Activated naive CD4-positive, alpha-beta T cell treated with anti-CD3 and anti-CD28 coated beads, Interleukin-2, amount 10 ng/mL, durations not matched to agents 7 days and 5 days (primary cell): ENCODE measurements at regions of chr3 and their contacts with region 1.

Region 1: DNA sequence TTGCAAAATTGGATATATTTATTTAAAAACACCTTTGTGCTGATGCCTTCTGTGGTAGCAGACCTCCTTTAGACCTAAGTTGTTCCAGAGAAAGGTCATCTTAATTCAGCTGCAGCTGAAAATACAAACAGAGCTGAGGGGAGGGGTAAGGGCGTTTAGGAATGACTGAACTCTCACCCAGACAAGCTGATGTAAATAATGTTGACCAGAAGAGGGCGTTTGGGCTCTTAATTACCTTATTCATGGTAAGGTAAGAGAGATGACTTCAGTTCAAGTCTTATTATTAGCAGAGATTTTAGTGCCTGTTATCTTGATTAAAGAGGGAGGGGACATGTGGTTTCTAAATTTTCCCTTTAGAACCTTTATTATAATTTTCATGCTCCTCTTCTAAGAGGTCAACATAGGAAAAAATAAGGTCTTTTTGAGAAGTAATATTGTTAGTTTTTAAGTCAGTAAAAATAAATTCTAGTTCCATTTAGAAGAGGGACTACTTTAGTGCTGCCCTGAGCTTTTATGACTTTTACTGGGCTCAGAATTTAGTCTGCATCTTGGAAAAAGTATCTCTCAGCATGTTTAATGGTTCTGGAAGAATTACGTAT is 46.3 kb downstream of the GPR171 start:
- DNase-seq: peak; percentile 50
- H3K4me3 Mint-ChIP-seq: no peak overlapping the region
- H3K27ac Mint-ChIP-seq: no peak overlapping the region
- H3K4me1 Mint-ChIP-seq: no peaks in the 10 kb centered on the region
- H3K27me3 Mint-ChIP-seq: peaks cover 17% of the 10 kb centered on the region

Region 2: DNA sequence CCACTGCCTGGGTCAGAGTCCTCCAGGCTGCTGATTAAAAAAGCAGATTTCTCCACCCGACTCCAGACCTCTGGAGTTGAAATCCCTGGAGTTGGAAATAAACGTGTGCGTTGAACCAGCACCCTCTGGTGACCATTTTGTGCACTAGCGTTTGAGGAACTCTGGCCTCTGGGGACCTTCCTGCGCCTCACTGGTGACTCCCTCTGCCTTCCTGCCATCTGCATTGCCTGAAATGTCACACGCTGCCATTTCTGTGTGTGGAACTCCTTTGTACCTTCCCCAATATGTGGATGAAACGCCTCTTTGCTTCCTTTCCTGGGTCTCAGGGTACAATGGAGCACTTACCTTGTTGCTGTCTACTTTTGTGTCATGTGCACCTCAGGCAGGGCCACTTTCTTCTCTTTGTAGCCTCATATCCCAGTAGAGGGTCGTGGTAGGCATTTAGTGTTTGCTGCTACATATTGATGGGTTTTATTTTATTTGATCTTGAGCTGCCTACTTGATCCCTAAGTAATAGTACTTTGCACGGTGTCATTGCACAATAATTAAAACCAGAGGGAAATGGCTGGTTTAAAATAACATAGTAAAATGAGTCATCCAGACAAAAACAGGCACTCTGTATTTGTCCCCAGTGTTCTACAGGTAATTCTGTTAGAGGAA is 10.5 kb before region 1 on chr3:
- CTCF ChIA-PET with region 1: interaction called, 13 read pairs
- DNase-seq: peak; percentile 69
- H3K4me3 Mint-ChIP-seq: no peak overlapping the region
- H3K27ac Mint-ChIP-seq: no peak overlapping the region
- H3K4me1 Mint-ChIP-seq: peaks cover 3% of the 10 kb centered on the region
- H3K27me3 Mint-ChIP-seq: peaks cover 17% of the 10 kb centered on the region

Region 3: DNA sequence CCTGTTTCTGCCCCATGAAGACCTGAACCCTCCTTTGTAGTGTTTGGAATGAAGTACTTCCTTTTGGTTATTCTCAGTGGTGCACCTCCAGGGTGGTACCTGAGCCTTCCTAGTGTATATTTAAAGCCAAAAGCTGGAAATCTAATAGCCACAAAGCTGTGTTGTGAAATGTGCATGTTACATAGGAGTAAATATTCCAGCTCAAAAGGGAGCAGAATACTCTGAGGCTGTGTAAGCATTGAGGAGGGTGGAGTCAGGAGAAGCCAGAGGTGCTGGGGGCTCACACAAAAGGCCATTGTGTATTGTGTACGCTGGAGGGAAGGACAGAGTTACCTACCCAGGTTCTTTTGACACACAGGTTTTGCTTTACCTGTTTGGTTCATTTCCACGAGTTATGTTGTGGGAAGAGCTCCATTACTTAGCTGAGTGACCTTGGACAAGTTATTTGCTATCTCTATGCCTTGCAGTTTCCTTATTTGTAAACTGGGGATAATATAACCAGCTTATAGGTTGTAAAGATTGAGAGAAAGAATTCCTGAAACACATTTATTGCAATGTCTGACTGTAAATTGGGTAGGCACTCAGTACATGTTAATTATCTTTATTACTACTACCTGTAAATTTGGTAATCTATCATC is 21.6 kb after region 1 on chr3:
- CTCF ChIA-PET with region 1: no interaction called
- DNase-seq: no peak
- H3K4me3 Mint-ChIP-seq: no peak overlapping the region
- H3K27ac Mint-ChIP-seq: no peak overlapping the region
- H3K4me1 Mint-ChIP-seq: peaks cover 36% of the 10 kb centered on the region
- H3K27me3 Mint-ChIP-seq: peaks cover 8% of the 10 kb centered on the region

Region 4: DNA sequence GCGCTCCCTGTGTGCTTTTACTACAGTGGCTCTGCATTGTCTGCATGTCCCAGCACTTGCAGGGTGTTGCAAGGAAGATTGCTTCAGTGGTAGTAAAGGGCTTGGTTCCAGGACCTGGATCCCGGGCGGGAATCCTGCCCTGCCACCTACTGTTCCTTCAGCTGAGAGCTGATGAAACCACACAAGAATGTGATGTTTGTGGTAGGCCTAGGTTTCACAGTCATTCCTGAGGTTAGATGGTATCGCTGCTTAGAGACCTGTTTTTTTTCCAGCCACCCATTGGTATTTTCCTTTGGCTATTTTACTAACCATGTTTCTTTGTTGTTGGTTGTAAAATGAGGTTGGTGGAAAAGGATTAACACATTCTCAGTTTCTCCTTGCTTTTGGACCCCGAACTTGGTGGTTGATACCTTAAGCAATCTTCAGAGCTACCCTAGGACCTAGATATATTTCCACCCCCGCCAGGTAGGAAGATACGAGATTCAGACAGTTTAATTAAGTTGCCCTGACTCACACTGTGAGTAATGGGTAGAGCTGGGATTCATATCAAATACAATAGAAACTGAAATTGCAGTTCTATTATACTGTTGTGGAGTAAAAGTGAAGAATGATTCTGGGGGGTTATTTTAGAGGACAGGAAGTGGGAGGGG is 148.5 kb after region 1 on chr3:
- CTCF ChIA-PET with region 1: interaction called, 10 read pairs
- DNase-seq: no peak
- H3K4me3 Mint-ChIP-seq: no peak overlapping the region
- H3K27ac Mint-ChIP-seq: no peak overlapping the region
- H3K4me1 Mint-ChIP-seq: peaks cover 14% of the 10 kb centered on the region
- H3K27me3 Mint-ChIP-seq: peaks cover 5% of the 10 kb centered on the region

Region 5: DNA sequence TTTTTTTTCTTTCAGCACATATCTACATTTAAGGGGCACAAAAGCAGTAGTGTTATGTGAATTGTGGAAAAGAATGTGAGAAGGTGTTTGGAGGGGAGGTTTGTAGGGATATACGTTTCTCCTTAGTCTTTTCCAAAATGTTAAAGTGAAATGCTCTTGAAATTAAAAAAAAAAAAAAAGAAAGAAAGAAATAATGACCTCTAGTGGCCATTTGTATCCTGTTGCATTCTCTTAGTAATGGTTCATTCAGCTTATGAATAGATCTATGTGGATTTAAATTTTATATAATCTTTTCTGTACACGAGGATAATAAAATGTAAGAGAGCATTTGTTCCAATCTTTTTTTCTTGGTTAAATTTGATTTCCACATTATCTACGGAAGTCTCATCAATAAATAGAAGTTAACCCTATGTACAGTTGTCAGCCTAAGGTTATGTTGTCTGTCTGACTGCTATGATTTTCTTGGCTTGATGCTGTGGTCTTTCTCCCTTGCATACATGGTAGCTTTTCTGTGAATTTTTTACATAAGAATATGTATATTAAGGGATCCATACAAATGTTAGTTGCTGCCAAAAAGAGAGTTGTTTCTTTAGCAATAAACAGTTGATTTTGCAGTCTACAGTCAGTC is 171.0 kb after region 1 on chr3:
- CTCF ChIA-PET with region 1: interaction called, 13 read pairs
- DNase-seq: no peak
- H3K4me3 Mint-ChIP-seq: no peak overlapping the region
- H3K27ac Mint-ChIP-seq: no peak overlapping the region
- H3K4me1 Mint-ChIP-seq: peaks cover 7% of the 10 kb centered on the region
- H3K27me3 Mint-ChIP-seq: peaks cover 8% of the 10 kb centered on the region

Region 6: DNA sequence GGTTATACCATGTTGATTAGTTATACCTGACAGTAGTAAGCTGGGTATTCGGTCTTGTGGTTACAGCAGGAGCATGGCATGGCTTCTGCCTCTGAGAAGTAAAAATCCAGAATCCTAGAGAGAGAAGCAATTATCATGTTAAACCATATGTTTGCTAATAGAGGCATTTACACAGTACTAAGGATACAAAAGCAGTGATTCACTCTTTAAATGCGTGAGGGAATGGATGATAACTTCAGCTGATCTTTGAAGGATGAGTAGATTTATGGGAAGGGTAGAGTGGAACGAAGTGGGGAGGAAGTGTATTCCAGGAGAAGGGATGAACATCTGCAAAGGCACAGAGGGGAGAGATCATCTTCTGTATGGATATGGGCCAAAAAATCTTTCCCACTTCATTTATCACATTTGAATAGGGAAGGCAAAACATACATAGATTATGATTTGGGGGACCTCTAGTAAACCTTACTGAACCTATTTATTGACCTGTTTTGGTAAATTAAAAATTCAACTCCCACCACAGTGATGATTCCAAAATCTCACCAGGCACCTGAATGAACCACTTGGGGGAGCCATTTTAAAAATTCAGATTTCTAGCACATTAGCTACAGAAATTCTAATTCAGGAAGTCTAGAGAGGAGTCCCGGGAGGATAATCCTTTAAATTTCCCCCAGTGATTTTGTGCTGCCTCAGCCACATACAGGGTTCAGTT is 269.1 kb after region 1 on chr3:
- CTCF ChIA-PET with region 1: no interaction called
- DNase-seq: no peak
- H3K4me3 Mint-ChIP-seq: no peak overlapping the region
- H3K27ac Mint-ChIP-seq: no peak overlapping the region
- H3K4me1 Mint-ChIP-seq: no peaks in the 10 kb centered on the region
- H3K27me3 Mint-ChIP-seq: peaks cover 3% of the 10 kb centered on the region